Ascending aorta (tissue), 2 donors: ENCODE measurements at regions of chr4 and their contacts with region 1.

Region 1: DNA sequence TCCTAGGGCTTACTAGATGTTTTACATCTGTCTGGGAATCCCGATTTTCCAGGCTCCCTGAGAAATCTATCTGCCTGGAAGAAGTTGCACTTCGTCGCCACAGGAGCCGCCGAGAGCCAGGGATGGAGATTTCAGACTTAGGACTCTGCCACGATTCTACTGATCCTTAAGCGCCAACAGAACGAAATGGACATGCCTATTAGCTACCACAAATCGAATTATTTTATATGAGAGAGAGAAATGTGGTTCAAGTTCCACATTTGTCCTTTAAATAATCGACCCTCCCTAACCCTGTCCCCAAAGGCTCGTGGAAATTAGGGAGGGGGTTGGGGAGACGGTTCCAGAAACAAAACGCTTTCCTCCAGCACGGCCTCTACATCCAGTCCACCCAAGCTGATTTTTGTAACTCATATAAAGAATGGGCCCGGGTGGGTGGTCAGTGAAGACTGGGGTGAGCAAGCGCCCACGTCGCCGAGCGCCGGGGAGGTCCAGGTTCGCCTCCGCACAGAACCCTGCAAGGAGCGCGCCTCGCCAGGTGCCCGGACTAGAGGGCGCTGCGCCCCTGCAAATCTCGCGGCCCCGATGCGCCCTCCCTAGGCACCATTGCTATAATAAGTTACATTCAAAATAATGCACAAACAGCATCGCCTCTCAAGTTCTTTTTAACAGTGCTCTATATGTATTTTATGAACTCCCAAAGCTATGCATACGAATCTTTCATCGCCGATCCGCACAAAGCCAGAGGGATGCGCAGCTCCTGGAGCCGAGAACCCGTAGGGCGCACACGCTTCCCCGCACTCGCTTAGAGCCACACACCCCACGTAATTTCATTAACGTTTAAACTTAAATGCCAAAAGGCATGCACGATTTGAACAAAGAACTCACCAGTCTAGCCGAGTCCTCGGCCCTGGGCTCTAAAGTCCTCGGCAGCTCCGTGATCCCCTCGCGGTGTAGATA is 2.1 kb upstream of the FAT1 start:
- DNase-seq: peak in 1 of 2 donors; percentile 86
- H3K4me3 ChIP-seq: peak overlapping the region; percentile 76 to 84
- H3K27ac ChIP-seq: peak overlapping the region; percentile 95 to 96
- H3K4me1 ChIP-seq: no peaks in the 10 kb centered on the region
- H3K27me3 ChIP-seq: no peaks in the 10 kb centered on the region
- CTCF ChIP-seq: peak; percentile 19 to 73 (median 60)

Region 2: GRCh38 chr4:186570193-186570996 is 155.4 kb before region 1 on chr4:
- intact Hi-C with region 1: no loop called
- DNase-seq: no peak
- H3K4me3 ChIP-seq: peak overlapping the region in 1 of 2 donors; percentile 37
- H3K27ac ChIP-seq: no peak overlapping the region
- H3K4me1 ChIP-seq: no peaks in the 10 kb centered on the region
- H3K27me3 ChIP-seq: no peaks in the 10 kb centered on the region
- CTCF ChIP-seq: no peak

Region 3: GRCh38 chr4:186669159-186669731 is 56.5 kb before region 1 on chr4:
- intact Hi-C with region 1: loop called (anchors 1 kb)
- DNase-seq: no peak
- H3K4me3 ChIP-seq: peak overlapping the region in 1 of 2 donors; percentile 50
- H3K27ac ChIP-seq: no peak overlapping the region
- H3K4me1 ChIP-seq: peaks cover 0 to 8% of the 10 kb centered on the region in 2 donors
- H3K27me3 ChIP-seq: no peaks in the 10 kb centered on the region
- CTCF ChIP-seq: peak in 2 of 3 experiments; percentile 52 to 80

Region 4: DNA sequence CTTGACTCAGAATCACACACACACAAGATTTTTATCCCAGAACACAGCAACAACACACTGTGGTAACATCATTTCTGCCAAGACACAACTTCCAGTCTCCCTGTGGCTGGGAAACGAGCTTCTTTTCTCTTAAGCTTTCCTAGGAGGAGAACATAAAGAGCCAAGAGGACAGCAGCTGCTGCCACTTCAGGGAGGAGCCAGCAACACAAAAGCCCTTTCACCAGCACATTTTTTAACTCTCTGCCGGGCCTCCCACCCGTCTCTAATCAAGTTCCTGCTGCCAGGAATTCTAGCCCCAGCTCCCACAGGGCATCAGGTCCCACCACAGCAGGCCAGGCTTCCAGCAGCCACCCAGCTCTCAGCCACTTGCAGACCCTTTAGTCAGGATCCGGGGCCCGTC is 24.5 kb before region 1 on chr4:
- intact Hi-C with region 1: loop called (anchors 1 kb)
- DNase-seq: peak in 1 of 2 donors; percentile 65
- H3K4me3 ChIP-seq: peak overlapping the region in 1 of 2 donors; percentile 0
- H3K27ac ChIP-seq: peak overlapping the region; percentile 63 to 79
- H3K4me1 ChIP-seq: peaks cover 26 to 47% of the 10 kb centered on the region in 2 donors
- H3K27me3 ChIP-seq: no peaks in the 10 kb centered on the region
- CTCF ChIP-seq: no peak

Region 5: GRCh38 chr4:186936496-186937375 is 211.0 kb after region 1 on chr4:
- intact Hi-C with region 1: loop called (anchors 5 kb)
- DNase-seq: no peak
- H3K4me3 ChIP-seq: peak overlapping the region in 1 of 2 donors; percentile 31
- H3K27ac ChIP-seq: peak overlapping the region in 1 of 2 donors; percentile 52
- H3K4me1 ChIP-seq: peaks cover 0 to 3% of the 10 kb centered on the region in 2 donors
- H3K27me3 ChIP-seq: no peaks in the 10 kb centered on the region
- CTCF ChIP-seq: peak in 1 of 3 experiments; percentile 22

Region 6: GRCh38 chr4:187118602-187119120 is 392.9 kb after region 1 on chr4:
- intact Hi-C with region 1: no loop called
- DNase-seq: no peak
- H3K4me3 ChIP-seq: no peak overlapping the region
- H3K27ac ChIP-seq: no peak overlapping the region
- H3K4me1 ChIP-seq: no peaks in the 10 kb centered on the region
- H3K27me3 ChIP-seq: no peaks in the 10 kb centered on the region
- CTCF ChIP-seq: no peak

Region 7: DNA sequence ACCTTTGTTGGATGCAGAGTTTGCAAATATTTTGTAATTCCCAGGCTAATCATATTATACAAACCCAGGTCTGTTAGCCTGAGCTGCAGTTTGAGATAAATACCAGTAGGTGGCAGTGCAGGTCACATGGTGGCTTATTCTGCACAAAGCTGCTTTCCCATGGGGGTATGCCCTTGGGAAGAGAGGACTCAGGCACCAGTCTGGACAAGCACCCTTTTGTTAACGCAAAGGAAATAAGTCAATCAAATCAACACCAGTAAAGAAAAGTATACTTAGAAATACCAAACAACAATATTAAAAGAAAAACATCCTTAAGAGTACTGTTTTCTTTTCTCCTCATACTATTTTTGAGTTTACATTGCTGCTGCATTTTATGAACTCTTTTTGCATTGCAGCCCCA is 880.8 kb after region 1 on chr4:
- intact Hi-C with region 1: loop called (anchors 5 kb)
- DNase-seq: no peak
- H3K4me3 ChIP-seq: no peak overlapping the region
- H3K27ac ChIP-seq: no peak overlapping the region
- H3K4me1 ChIP-seq: peaks cover 0 to 6% of the 10 kb centered on the region in 2 donors
- H3K27me3 ChIP-seq: no peaks in the 10 kb centered on the region
- CTCF ChIP-seq: peak; percentile 41 to 83 (median 66)

Region 8: DNA sequence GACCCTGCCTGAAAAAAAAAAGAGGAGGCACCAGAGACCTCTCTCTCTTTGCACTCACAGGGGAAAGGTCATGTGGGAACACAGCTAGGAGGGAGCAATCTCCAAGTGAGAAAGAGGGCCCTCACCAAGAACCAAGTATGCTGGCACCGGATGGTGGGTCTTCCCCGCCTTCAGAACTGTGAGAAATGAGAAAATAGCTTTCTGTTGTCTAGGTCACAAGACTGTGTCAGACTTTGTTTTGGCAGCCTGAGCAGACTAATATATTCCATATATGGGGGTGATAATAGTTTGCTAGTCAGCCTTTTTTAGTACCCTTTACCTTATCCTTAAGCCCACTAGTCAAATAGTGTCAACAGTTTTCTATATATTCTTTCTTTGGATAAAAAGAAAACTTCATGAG is 1606.5 kb after region 1 on chr4:
- intact Hi-C with region 1: loop called (anchors 2 kb)
- DNase-seq: peak in 1 of 2 donors; percentile 77
- H3K4me3 ChIP-seq: no peak overlapping the region
- H3K27ac ChIP-seq: peak overlapping the region; percentile 87 to 88
- H3K4me1 ChIP-seq: peaks cover 0 to 15% of the 10 kb centered on the region in 2 donors
- H3K27me3 ChIP-seq: no peaks in the 10 kb centered on the region
- CTCF ChIP-seq: no peak